AG04450 (cell line): ENCODE measurements at regions of chr5 and their contacts with region 1.

Region 1: GRCh38 chr5:41305056-41305455 is 91.7 kb upstream of the C6 start:
- DNase-seq: no peak
- H3K4me3 ChIP-seq: no peak overlapping the region
- H3K27ac ChIP-seq: no peak overlapping the region
- H3K27me3 ChIP-seq: no peaks in the 10 kb centered on the region
- CTCF ChIP-seq: no peak

Region 2: DNA sequence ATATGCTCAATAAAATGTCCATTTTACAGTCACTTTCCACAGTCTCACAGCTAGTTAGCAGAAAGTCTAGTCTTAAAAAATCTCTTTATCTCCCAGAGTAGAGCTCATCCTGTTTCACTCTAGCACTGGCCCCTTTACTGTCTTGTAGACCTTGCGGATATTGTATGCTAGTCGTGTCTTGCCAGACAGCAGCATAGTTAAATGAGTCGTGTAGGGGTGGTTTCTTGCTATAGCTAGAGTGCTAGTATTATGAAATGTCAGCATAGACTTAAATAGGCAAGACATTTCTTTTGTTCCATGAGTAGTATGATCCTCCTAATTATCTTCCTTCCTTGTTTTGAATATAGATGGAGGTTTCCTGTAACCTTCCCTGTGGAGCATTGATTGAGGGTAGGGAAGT is 318.4 kb before region 1 on chr5:
- CTCF ChIA-PET with region 1: no interaction called
- POLR2A ChIA-PET with region 1: interaction called, 12 read pairs
- DNase-seq: no peak
- H3K4me3 ChIP-seq: no peak overlapping the region
- H3K27ac ChIP-seq: no peak overlapping the region
- H3K27me3 ChIP-seq: no peaks in the 10 kb centered on the region
- CTCF ChIP-seq: no peak